ENCODE measurements at regions of chr11 and their contacts with region 1.

Region 1: DNA sequence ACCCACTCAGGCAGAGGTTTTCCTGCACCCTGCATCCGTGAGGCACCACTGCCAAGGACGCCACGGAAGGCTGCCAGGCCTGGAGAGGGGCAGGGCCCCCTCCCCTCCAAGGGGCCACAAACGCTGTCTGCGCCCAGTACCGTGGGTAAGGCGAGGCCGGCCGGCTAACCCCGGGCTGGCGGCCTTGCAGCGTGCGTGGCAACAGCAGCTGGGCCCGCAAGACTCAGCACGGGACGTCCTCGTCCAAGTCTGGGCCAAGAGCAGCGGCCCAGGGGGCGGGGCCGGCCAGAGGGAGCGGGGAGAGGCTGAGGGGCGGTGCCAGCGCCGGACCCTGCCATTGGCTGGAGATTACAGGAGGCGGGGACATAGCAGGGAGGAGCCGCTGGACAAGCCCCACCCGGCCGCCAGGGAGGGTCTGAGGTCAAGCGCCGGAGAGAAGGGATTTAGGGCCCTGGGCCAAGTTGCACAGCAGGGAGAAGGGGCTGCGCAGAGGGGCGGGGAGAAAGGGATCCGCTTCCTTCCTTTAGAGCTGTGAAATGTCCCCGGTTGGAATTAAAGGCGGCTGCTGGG is 16.0 kb downstream of the SLC43A1 start:
- DNase-seq: peak; percentile 98 to 99
- H3K4me3 ChIP-seq: peak overlapping the region; percentile 24 to 47
- H3K27ac ChIP-seq: peak overlapping the region; percentile 79 to 82
- H3K4me1 ChIP-seq: peaks cover 11 to 19% (median 14%) of the 10 kb centered on the region in 4 donors
- H3K27me3 ChIP-seq: no peaks in the 10 kb centered on the region
- CTCF ChIP-seq: peak in 1 of 2 experiments; percentile 28

Region 2: GRCh38 chr11:57515332-57516060 is 16.0 kb after region 1 on chr11 and contains the start of gene SLC43A1:
- intact Hi-C with region 1: loop called (anchors 2 kb)
- DNase-seq: peak; percentile 70 to 87
- H3K4me3 ChIP-seq: peak within 1 kb of the TSS; percentile 72 to 75
- H3K27ac ChIP-seq: peak within 1 kb of the TSS; percentile 71 to 77
- H3K4me1 ChIP-seq: peaks cover 0 to 16% (median 14%) of the 10 kb centered on the region in 4 donors
- H3K27me3 ChIP-seq: no peaks in the 10 kb centered on the region
- CTCF ChIP-seq: no peak

Region 3: DNA sequence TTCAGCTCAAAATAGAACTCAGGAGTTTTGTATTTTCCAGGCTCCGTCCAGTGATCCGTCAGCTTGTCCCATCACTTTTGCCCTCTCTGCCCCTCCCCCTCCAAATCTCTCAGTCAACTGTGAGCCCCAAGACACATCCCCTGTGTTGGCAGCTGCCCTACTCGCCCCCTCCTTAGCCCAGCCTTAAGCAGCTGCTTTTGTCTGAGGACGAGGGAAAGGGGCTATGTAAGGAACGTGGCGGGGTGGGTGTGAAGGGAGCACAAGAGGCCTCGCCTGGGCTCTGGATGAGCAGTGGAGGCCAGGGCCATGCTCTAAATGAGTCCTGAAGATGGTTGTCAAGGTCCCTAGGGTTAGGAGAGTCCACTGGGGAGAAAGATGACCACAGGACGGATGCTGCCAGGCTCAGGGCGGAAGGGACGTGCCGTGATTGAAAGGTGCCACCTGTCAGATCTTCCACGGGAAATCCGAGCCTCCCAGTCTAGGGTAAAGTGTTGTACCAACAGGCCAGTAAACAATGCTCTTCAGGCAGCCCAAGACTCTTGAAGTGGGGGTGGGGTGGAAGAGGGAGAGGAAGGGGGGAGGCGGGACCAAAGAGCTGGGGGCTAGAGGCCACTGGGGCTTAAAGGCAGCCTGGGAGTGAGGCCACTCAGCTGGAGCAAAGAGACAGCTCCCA is 37.6 kb after region 1 on chr11 and contains the start of gene SMTNL1:
- intact Hi-C with region 1: no loop called
- DNase-seq: no peak
- H3K4me3 ChIP-seq: no peak within 1 kb of the TSS
- H3K27ac ChIP-seq: no peak within 1 kb of the TSS
- H3K4me1 ChIP-seq: no peaks in the 10 kb centered on the region
- H3K27me3 ChIP-seq: peaks cover 0 to 5% of the 10 kb centered on the region in 2 donors
- CTCF ChIP-seq: no peak

Region 4: DNA sequence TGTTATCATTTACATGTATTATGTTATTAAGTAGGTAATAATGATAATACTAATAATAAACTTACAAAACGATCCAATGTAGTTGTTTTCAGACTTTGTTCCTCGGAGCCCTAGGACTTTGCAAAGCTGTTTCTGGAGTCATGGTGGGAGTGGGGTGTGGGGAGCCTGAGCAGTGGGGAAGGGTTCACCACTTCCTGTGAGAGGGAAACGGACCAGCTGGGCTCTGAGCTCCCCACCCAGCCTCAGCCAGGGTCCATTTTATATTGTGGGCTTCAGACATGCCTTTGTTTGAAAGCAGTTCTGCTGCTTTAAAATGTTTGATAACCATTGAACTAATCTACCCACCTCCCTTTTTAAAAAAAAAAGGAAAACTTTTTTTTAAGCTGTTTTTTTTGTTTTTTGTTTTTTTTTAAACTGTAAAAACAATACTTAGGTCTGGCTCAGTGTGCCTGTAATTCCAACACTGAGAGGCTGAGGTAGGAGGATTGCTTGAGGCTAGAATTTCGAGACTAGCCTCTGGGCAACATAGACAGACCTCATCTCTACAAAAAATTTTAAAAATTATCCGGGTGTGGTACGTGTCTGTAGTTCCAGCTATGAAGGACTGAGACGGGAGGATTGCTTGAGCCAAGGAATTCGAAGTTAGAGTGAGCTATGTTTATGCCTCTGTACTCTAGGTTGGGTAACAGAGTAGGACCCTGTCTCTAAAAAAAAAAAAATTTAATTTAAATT is 105.0 kb after region 1 on chr11:
- intact Hi-C with region 1: no loop called
- DNase-seq: no peak
- H3K4me3 ChIP-seq: no peak overlapping the region
- H3K27ac ChIP-seq: no peak overlapping the region
- H3K4me1 ChIP-seq: peaks cover 0 to 7% (median 4%) of the 10 kb centered on the region in 4 donors
- H3K27me3 ChIP-seq: no peaks in the 10 kb centered on the region
- CTCF ChIP-seq: no peak

Region 5: DNA sequence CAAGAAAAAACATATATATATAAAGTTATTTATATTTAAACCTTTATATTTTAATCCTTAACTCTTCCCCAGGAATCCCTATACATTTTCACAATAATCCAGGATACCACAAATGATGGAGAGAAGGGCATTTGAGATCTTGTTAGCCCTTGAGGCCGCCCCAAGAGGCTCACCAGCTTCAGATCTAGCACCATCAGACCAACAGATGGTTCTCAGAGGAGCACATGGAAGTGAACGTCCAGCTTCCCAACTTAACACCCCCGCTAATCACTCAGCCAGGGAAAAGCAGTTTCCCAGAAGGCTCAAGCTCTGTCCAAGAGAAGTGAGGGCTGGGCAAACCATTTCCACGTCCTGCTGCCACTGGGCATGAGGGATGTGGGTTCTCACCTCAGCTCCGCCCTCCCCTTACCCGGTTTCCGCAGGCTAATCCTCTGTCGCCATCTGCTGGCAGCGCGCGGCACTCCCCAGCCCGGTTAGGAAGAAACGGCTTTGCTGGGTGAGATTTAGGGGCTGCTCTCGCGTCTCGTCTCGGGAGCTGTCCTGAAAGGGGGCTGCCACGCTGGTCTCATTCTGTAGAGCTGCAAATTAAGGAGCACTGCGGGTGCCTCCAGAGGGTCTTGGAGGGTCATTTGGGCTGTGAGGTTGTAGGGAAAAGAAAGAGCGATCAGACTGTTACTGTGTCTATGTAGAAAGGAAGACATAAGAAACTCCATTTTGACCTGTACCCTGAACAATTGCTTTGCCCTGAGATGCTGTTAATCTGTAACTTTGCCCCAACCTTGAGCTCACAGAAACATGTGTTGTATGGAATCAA is 1636.4 kb after region 1 on chr11:
- intact Hi-C with region 1: no loop called
- DNase-seq: peak; percentile 79 to 82
- H3K4me3 ChIP-seq: no peak overlapping the region
- H3K27ac ChIP-seq: no peak overlapping the region
- H3K4me1 ChIP-seq: peaks cover 0 to 6% (median 0%) of the 10 kb centered on the region in 4 donors
- H3K27me3 ChIP-seq: no peaks in the 10 kb centered on the region
- CTCF ChIP-seq: peak; percentile 91 to 99